GM12878 (cell line): ENCODE measurements at regions of chr10 and their contacts with region 1.

Region 1: GRCh38 chr10:60434418-60435046 is 44.9 kb upstream of the ANK3 start:
- DNase-seq: no peak
- ATAC-seq: peak; percentile 64
- H3K4me3 ChIP-seq: no peak overlapping the region
- H3K27ac ChIP-seq: no peak overlapping the region
- H3K4me1 ChIP-seq: no peaks in the 10 kb centered on the region
- H3K27me3 ChIP-seq: no peaks in the 10 kb centered on the region
- CTCF ChIP-seq: peak; percentile 42 to 69 (median 46); a peak in 5 of 6 replicates
- EP300 ChIP-seq: no peak
- POLR2A ChIP-seq: no peak
- RAD21 ChIP-seq: peak; percentile 93

Region 2: DNA sequence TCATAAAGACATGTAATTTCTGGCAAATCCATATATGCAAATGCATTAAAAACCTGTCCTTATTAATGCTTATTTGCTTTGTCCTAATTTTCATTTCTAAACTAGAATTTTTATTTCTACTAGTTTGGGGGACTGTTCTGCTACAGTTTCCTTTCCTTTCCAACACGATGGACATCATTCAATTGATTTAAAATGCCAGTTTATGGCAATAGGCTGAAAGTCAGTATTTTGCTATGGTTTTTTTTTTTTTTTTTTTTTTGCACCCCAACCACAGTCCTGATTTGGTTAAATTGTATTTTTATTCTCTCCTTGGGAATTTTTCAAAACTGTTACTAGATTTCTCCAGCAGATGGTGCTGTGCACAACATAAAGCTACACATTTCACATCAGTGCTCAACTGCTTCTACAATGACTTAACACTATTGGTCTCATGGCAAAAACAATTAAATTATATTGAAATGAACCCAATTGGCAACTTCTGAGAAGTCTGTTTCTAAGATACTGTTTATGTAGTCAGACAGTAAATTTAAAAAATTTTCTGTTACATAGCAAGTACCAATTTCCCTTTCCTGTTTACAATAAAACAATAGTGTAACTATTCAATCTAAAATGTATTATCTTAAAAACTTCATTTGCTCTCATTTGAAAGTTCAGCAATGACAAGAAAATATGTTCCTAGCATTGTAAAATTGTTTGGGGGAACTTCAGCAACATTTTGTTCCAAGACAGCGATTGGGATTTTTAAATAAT is 334.4 kb before region 1 on chr10:
- CTCF ChIA-PET with region 1: interaction called, 15 read pairs
- POLR2A ChIA-PET with region 1: no interaction called
- RAD21 ChIA-PET with region 1: interaction called, 4 read pairs
- SMC1A ChIA-PET with region 1: interaction called, 3 read pairs
- in situ Hi-C with region 1: loop called (anchors 10 kb)
- intact Hi-C with region 1: loop called (anchors 2 kb)
- DNase-seq: no peak
- ATAC-seq: peak; percentile 73
- H3K4me3 ChIP-seq: no peak overlapping the region
- H3K27ac ChIP-seq: no peak overlapping the region
- H3K4me1 ChIP-seq: peaks cover 9% of the 10 kb centered on the region
- H3K27me3 ChIP-seq: no peaks in the 10 kb centered on the region
- CTCF ChIP-seq: peak; percentile 51 to 55 (median 54); a peak in 5 of 6 replicates
- EP300 ChIP-seq: no peak
- POLR2A ChIP-seq: no peak
- RAD21 ChIP-seq: peak; percentile 66

Region 3: DNA sequence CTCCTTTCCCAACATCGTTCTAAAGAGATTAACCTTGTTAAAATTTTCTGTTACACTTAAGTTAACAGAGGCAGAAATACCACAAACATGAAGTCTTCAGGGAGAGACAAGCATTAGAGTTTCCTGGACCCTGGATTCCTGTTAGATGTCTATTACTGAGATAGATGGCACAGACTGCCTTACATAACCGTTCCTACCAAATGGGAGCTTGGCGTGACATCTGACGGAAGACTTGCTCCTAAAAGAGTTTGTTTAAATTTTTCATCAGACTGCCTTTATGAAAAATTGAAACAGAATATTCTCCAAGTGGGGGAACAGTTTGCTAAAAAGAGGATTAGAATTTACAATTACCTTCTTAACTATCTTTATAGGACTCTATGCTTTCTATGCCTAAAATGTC is 67.5 kb before region 1 on chr10:
- CTCF ChIA-PET with region 1: no interaction called
- POLR2A ChIA-PET with region 1: no interaction called
- RAD21 ChIA-PET with region 1: no interaction called
- SMC1A ChIA-PET with region 1: no interaction called
- in situ Hi-C with region 1: no loop called
- intact Hi-C with region 1: no loop called
- DNase-seq: no peak
- ATAC-seq: no peak
- H3K4me3 ChIP-seq: no peak overlapping the region
- H3K27ac ChIP-seq: no peak overlapping the region
- H3K4me1 ChIP-seq: no peaks in the 10 kb centered on the region
- H3K27me3 ChIP-seq: 0 out of 4 replicates have a peak, but pooled peaks cover 0 to 3% of the 10 kb centered on the region in 2 experiments
- CTCF ChIP-seq: no peak
- EP300 ChIP-seq: no peak
- POLR2A ChIP-seq: no peak
- RAD21 ChIP-seq: no peak

Region 4: DNA sequence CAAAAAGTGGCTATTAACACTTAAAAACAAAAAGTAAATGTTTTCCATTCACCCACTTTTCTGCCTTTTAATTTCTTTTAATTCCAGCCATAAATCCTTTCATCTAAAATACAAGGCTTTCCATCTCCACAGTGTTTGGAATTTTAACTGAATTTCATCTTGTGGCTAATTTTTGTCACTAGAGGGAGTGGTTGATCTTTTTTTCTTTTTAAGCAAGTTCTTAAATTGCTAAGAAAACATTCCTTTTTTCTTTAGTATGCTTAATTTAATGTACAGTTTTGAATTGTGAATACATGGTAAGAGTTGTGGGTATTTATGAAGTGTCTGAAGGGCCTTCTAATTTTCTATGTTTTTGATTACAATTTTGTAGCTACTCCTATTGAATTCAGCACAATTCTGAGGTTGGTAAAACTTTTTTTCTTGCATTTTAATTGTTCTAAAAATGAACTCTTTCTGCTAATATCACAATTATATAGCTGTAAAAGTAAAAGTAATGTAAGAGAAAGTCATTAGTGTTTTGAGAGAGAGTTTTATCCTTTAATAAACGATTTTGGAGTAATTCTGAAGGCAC is 10.0 kb after region 1 on chr10:
- CTCF ChIA-PET with region 1: interaction called, 11 read pairs
- POLR2A ChIA-PET with region 1: no interaction called
- RAD21 ChIA-PET with region 1: interaction called, 3 read pairs
- SMC1A ChIA-PET with region 1: no interaction called
- in situ Hi-C with region 1: no loop called
- intact Hi-C with region 1: no loop called
- DNase-seq: no peak
- ATAC-seq: no peak
- H3K4me3 ChIP-seq: no peak overlapping the region
- H3K27ac ChIP-seq: no peak overlapping the region
- H3K4me1 ChIP-seq: no peaks in the 10 kb centered on the region
- H3K27me3 ChIP-seq: no peaks in the 10 kb centered on the region
- CTCF ChIP-seq: no peak; a peak in 1 of 6 replicates
- EP300 ChIP-seq: no peak
- POLR2A ChIP-seq: no peak
- RAD21 ChIP-seq: peak; percentile 30; the same call in 1 of the 2 replicates